ENCODE measurements at regions of chr2 and their contacts with region 1.

Region 1: DNA sequence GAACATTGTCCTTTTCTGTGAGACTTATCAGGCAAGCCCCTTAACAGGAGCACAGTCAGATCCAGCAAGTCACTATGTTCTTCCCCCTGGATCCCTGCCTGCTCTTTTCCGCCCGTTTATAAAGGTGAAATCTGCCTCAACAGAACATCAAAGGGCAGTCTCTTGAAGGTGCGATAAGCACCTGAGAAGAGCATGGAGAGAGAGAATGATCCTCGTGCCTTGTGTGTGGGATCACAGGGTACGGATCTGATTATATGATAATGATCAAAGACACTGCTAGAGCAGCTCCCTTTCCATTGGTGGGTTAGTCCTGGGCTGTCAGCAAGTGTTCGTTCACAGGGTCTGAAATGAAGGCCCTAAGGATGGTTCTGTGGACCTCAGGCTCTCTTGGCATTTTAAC is 106.4 kb downstream of the ZAP70 start:
- DNase-seq: no peak
- ATAC-seq: no peak
- H3K4me3 ChIP-seq: no peak overlapping the region
- H3K27ac ChIP-seq: no peak overlapping the region
- H3K4me1 ChIP-seq: no peaks in the 10 kb centered on the region
- H3K27me3 ChIP-seq: no peaks in the 10 kb centered on the region
- CTCF ChIP-seq: no peak

Region 2: DNA sequence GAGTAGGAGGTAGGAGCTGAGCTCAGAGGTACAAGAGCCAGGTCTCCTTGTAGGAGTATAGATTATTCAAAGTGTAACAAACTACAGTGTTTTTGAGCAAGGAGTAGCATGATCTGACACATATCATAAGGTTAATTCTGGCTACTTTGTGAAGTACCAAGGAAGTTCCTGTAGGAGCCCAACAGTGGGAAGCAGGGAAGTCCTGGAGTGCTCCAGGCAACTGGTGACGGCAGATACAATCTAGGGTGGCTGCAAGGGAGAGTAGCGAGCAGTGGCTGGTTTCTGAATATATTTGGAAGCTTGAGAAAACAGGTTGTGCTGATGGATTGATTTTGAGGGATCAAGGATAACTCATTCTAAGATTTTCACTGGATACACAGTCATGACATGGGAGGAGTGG is 70.3 kb after region 1 on chr2:
- intact Hi-C with region 1: loop called in 1 of 10 experiments (anchors 10 kb)
- DNase-seq: no peak
- ATAC-seq: no peak
- H3K4me3 ChIP-seq: no peak overlapping the region
- H3K27ac ChIP-seq: no peak overlapping the region
- H3K4me1 ChIP-seq: no peaks in the 10 kb centered on the region
- H3K27me3 ChIP-seq: no peaks in the 10 kb centered on the region
- CTCF ChIP-seq: no peak

Measured in heart right ventricle (tissue), 16 donors.